Sciatic nerve (tissue), 2 donors: ENCODE measurements at regions of chr6 and their contacts with region 1.

Region 1: GRCh38 chr6:119066517-119066916 is 11.9 kb downstream of the FAM184A start:
- DNase-seq: no peak
- ATAC-seq: no peak

Region 2: DNA sequence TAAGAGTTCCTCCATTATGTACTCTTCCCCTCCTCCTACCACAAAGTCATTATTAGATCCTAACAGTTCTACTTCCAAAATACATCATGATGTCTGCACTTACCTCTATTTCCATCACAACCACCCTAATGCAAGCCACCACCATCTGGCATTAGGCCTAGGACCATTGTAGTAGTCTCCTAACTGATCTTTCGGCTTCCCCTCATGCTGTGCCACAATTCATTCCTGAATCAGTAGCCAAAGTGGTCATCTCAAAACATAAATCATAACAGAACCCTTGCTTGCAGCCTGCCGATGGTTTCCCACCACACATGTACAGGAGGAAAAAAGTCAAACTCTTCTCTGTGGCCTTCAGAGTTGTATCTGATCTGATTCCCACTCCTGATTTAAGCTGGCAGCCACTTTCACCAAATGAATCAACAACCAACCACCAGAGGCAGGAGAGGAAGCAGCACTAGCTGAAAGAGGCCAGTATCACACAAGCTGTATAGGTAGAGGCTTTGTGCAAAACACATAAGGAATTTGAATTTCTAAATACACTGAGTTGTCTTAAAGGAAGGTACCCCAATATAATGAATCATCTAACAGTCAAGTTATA is 14.1 kb before region 1 on chr6:
- intact Hi-C with region 1: no loop called
- DNase-seq: no peak
- ATAC-seq: no peak

Region 3: DNA sequence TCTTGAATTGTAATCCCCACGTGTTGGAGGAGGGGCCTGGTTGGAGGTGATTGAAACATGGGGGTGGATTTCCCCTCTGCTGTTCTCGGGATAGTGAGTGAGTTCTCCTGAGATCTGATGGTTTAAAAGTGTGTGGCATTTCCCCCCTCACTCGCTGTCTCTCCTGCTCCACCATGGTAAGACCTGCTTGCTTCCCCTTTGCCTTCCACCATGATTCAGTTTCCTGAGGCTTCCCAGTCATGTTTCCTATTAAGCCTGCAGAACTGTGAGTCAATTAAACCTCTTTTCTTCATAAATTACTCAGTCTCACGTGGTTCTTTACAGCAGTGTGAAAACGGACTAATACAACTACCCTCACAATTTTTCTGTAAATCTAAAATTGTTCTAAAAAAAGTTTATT is 38.8 kb after region 1 on chr6:
- intact Hi-C with region 1: no loop called
- DNase-seq: no peak
- ATAC-seq: no peak

Region 4: GRCh38 chr6:119284861-119285521 is 218.5 kb after region 1 on chr6:
- intact Hi-C with region 1: loop called (anchors 5 kb)
- DNase-seq: no peak
- ATAC-seq: no peak

Region 5: GRCh38 chr6:119459207-119459974 is 392.9 kb after region 1 on chr6:
- intact Hi-C with region 1: no loop called
- DNase-seq: no peak
- ATAC-seq: no peak

Region 6: GRCh38 chr6:119594907-119595306 is 528.4 kb after region 1 on chr6:
- intact Hi-C with region 1: no loop called
- DNase-seq: no peak
- ATAC-seq: no peak